CD4-positive, alpha-beta memory T cell (primary cell): ENCODE measurements at regions of chr4 and their contacts with region 1.

Region 1: DNA sequence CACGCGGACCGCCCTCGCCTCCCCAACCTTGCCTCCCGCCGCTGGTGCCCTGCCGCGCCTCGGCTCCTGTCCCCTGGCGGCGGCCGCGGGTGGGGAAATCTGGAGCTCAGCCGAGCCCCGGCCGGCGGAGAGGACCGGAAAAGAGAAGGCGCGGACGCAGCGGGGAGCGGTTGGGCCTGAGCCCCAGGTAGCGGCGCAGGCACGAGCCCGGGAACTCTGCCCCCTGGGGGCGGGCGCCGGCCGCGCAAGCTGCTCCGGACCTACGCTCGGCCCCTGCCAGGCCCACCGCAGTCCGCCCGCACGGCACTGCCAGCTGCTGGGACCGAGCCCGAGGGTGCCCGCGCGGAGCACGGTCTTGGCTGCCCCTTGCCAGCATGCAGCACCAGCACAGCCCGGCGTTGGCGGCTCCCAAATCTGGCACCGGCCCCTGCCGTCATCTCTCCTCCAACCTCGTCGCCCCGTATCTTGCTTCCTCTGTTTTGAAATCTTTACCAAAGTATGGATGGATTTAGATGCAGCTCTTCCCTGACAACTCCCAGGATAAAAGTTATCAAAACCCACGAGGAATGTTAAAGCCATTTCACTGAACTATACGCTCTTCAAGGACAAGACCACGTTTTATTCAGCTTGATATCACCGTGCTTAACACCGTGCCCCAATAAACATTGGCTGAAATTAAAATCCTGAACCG is at the start of gene PRSS12:
- DNase-seq: peak; percentile 36 to 43 (median 39)
- H3K4me3 ChIP-seq: peak within 1 kb of the TSS in 1 of 2 donors; percentile 25
- H3K4me3 Mint-ChIP-seq: peak within 1 kb of the TSS; percentile 62 to 91 (median 80)
- H3K27ac ChIP-seq: no peak within 1 kb of the TSS
- H3K27ac Mint-ChIP-seq: no peak within 1 kb of the TSS
- H3K4me1 ChIP-seq: peaks cover 12% of the 10 kb centered on the region
- H3K4me1 Mint-ChIP-seq: peaks cover 8 to 17% (median 11%) of the 10 kb centered on the region in 4 donors
- H3K27me3 ChIP-seq: peaks cover 24% of the 10 kb centered on the region
- H3K27me3 Mint-ChIP-seq: peaks cover 55 to 68% of the 10 kb centered on the region in 2 donors
- total RNA-seq, gene PRSS12: not detected

Region 2: DNA sequence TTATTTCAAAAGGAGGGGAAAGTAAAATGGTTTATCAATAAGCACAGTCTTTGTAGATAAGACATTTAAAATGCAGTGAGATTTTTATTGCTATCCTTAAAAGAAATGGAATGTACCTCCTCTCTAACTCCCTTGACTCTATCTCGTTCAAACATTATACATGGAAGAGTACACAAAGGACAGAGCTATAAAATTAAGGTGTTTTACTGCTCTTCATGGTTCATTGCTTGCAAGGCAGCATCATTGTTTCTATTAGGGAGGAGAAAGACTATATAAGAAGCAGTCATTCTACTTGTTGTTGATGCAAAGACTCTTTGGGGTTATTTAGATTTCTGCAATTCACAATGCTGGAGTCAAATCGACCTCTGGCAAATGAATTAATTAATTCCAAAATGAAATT is 698.9 kb before region 1 on chr4:
- CTCF ChIA-PET with region 1: no interaction called
- POLR2A ChIA-PET with region 1: no interaction called
- intact Hi-C with region 1: no loop called
- DNase-seq: no peak
- H3K4me3 ChIP-seq: no peak overlapping the region
- H3K4me3 Mint-ChIP-seq: no peak overlapping the region
- H3K27ac ChIP-seq: no peak overlapping the region
- H3K27ac Mint-ChIP-seq: no peak overlapping the region
- H3K4me1 ChIP-seq: no peaks in the 10 kb centered on the region
- H3K4me1 Mint-ChIP-seq: no peaks in the 10 kb centered on the region
- H3K27me3 ChIP-seq: no peaks in the 10 kb centered on the region
- H3K27me3 Mint-ChIP-seq: no peaks in the 10 kb centered on the region

Region 3: DNA sequence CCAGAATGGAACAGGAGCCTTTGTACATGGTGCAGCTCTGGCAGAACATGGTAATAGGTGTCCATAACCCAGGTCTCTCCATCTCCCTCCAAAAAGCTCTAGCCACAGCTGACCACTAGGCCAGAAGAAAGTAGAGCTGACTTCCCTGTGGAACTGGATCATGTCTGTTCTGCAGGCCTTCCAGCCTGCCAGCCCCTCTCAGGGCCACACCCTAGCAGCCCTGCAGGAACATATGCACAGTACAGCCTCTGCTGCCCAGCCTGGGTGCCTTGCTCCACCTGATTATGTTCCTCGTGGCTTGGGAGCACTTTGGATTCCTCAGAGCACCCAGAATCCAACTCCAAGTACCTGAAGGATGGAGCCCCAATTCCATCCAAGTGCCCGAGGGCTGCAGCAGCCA is 306.7 kb before region 1 on chr4:
- CTCF ChIA-PET with region 1: no interaction called
- POLR2A ChIA-PET with region 1: no interaction called
- intact Hi-C with region 1: no loop called
- DNase-seq: no peak
- H3K4me3 ChIP-seq: no peak overlapping the region
- H3K4me3 Mint-ChIP-seq: no peak overlapping the region
- H3K27ac ChIP-seq: no peak overlapping the region
- H3K27ac Mint-ChIP-seq: no peak overlapping the region
- H3K4me1 ChIP-seq: no peaks in the 10 kb centered on the region
- H3K4me1 Mint-ChIP-seq: no peaks in the 10 kb centered on the region
- H3K27me3 ChIP-seq: no peaks in the 10 kb centered on the region
- H3K27me3 Mint-ChIP-seq: peaks cover 0 to 3% of the 10 kb centered on the region in 2 donors

Region 4: DNA sequence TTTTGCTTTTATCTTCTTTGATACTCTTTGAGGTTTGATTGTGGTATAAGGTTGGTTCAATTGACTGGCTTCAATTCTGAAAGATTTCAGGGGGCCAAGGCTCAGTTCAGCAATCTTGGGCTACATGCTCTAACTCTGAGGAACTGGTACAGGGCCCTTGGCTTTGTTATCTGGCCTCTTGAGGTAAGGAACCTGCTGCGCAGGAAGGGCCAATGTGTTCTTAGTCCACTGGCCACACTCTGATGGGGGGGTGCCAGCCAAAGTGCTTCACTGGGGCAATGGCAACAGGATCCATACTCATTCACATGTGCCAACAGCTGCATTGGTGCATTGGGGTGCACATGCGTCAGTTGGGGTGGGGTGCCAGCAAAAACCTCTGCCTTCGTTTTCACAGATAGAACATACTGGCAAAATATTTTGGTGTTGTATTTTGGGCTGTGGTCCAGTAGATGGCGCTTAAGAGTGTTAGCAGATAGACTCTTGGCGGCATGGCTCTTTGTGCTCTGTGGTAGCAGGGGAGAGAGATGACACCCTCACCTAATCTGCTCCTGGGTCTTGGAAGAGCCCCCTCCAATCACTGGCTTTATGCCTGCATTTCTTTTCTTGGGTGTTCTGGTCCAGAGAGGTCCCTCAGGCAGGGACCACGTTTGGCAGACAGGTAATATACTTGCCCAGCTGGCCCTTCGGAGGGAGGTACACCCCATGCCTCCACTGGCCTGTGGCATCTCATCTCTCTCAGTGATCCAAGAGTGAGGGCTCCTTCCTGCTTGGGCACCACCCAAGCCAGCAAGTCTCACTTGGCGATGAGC is 275.8 kb before region 1 on chr4:
- CTCF ChIA-PET with region 1: no interaction called
- POLR2A ChIA-PET with region 1: no interaction called
- intact Hi-C with region 1: no loop called
- DNase-seq: peak in 1 of 5 donors; percentile 1
- H3K4me3 ChIP-seq: no peak overlapping the region
- H3K4me3 Mint-ChIP-seq: no peak overlapping the region
- H3K27ac ChIP-seq: no peak overlapping the region
- H3K27ac Mint-ChIP-seq: no peak overlapping the region
- H3K4me1 ChIP-seq: no peaks in the 10 kb centered on the region
- H3K4me1 Mint-ChIP-seq: no peaks in the 10 kb centered on the region
- H3K27me3 ChIP-seq: no peaks in the 10 kb centered on the region
- H3K27me3 Mint-ChIP-seq: no peaks in the 10 kb centered on the region

Region 5: DNA sequence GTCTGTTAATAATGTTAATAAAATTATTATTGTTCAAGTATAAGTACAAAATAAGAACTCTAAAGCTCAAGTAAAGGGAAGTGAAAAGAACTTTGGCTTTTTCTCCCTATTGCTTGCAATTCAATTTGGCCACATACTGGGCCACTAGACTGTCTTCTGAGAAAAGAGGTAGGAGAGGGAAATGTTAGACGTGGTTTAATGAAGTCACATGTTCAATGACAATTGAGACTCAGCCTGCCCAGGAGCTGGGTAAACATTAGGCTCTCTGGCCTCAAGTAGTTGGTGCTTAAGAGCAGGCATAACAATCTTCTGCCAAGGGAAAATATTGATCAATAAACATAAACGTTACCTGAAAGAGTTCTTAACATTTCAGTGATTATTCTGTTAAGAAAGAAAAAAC is 14.9 kb after region 1 on chr4:
- CTCF ChIA-PET with region 1: interaction called, 16 read pairs
- POLR2A ChIA-PET with region 1: no interaction called
- intact Hi-C with region 1: no loop called
- DNase-seq: no peak
- H3K4me3 ChIP-seq: no peak overlapping the region
- H3K4me3 Mint-ChIP-seq: no peak overlapping the region
- H3K27ac ChIP-seq: no peak overlapping the region
- H3K27ac Mint-ChIP-seq: no peak overlapping the region
- H3K4me1 ChIP-seq: no peaks in the 10 kb centered on the region
- H3K4me1 Mint-ChIP-seq: no peaks in the 10 kb centered on the region
- H3K27me3 ChIP-seq: no peaks in the 10 kb centered on the region
- H3K27me3 Mint-ChIP-seq: peaks cover 8 to 10% of the 10 kb centered on the region in 2 donors

Region 6: GRCh38 chr4:118760493-118760892 is 407.5 kb after region 1 on chr4:
- CTCF ChIA-PET with region 1: no interaction called
- POLR2A ChIA-PET with region 1: no interaction called
- intact Hi-C with region 1: no loop called
- DNase-seq: no peak
- H3K4me3 ChIP-seq: no peak overlapping the region
- H3K4me3 Mint-ChIP-seq: no peak overlapping the region
- H3K27ac ChIP-seq: no peak overlapping the region
- H3K27ac Mint-ChIP-seq: peak overlapping the region in 1 of 7 donors; percentile 34
- H3K4me1 ChIP-seq: no peaks in the 10 kb centered on the region
- H3K4me1 Mint-ChIP-seq: peaks cover 0 to 7% (median 3%) of the 10 kb centered on the region in 4 donors
- H3K27me3 ChIP-seq: no peaks in the 10 kb centered on the region
- H3K27me3 Mint-ChIP-seq: no peaks in the 10 kb centered on the region